ENCODE measurements at regions of chr10 and their contacts with region 1.

Region 1: DNA sequence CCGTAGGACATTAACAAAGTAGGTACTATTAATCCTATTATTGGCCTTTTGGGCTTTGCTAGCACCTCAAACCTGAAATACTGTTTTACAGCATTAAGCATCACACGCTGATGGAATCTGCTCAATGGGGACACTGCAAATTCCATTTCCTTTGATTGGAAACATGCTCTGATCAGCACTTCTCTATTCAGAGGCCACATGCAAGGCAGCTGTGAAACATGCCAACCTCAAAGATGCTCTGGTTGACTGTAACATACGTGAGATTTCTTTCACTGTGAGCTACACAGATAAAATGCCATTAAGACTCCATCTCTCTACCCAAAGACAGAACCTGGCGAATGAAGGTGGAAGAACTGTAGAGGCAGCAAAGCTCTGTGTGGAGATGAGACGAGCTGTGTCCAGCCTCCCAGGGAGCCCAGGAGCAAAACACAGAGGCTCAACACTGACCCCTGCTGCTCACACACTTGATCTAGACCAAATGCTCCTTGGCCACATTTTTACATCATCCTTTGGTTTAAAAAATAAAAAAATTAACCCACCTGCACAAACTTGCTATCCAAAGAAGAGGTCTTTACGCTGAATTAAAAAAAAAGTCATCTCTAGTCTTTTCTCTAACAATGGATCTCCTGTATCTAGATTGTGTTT is 8.0 kb downstream of the RSU1 start:
- DNase-seq: peak in 1 of 2 donors; percentile 23
- ATAC-seq: peak; percentile 52 to 81 (median 78)
- H3K4me3 ChIP-seq: no peak overlapping the region
- H3K27ac ChIP-seq: no peak overlapping the region
- H3K4me1 ChIP-seq: peaks cover 6% of the 10 kb centered on the region
- H3K27me3 ChIP-seq: no peaks in the 10 kb centered on the region
- CTCF ChIP-seq: peak; percentile 57

Region 2: GRCh38 chr10:15901889-15902288 is 907.3 kb before region 1 on chr10:
- intact Hi-C with region 1: loop called in 1 of 2 experiments (anchors 10 kb)
- DNase-seq: no peak
- ATAC-seq: no peak
- H3K4me3 ChIP-seq: no peak overlapping the region
- H3K27ac ChIP-seq: no peak overlapping the region
- H3K4me1 ChIP-seq: no peaks in the 10 kb centered on the region
- H3K27me3 ChIP-seq: peaks cover 0 to 7% (median 0%) of the 10 kb centered on the region in 3 donors
- CTCF ChIP-seq: no peak

Measured in psoas muscle (tissue), 8 donors.